ENCODE measurements at regions of chr5 and their contacts with region 1.

Region 1: GRCh38 chr5:77086689-77087483 is at the start of gene ZBED3:
- DNase-seq: peak; percentile 29 to 87 (median 68)
- ATAC-seq: peak; percentile 87
- H3K4me3 ChIP-seq: peak within 1 kb of the TSS; percentile 74
- H3K4me3 Mint-ChIP-seq: peak within 1 kb of the TSS; percentile 92
- H3K27ac ChIP-seq: peak within 1 kb of the TSS; percentile 34 to 57
- H3K27ac Mint-ChIP-seq: peak within 1 kb of the TSS; percentile 84
- H3K4me1 ChIP-seq: peaks cover 16% of the 10 kb centered on the region
- H3K4me1 Mint-ChIP-seq: peaks cover 25% of the 10 kb centered on the region
- H3K27me3 ChIP-seq: no peaks in the 10 kb centered on the region
- H3K27me3 Mint-ChIP-seq: peaks cover 2% of the 10 kb centered on the region
- CTCF ChIP-seq: peak; percentile 31
- total RNA-seq, gene ZBED3: 11.6 to 12.3 TPM

Region 2: GRCh38 chr5:76971516-76971915 is 115.4 kb before region 1 on chr5:
- CTCF ChIA-PET with region 1: no interaction called
- POLR2A ChIA-PET with region 1: no interaction called
- intact Hi-C with region 1: no loop called
- DNase-seq: no peak
- ATAC-seq: no peak
- H3K4me3 ChIP-seq: no peak overlapping the region
- H3K4me3 Mint-ChIP-seq: no peak overlapping the region
- H3K27ac ChIP-seq: no peak overlapping the region
- H3K27ac Mint-ChIP-seq: no peak overlapping the region
- H3K4me1 ChIP-seq: no peaks in the 10 kb centered on the region
- H3K4me1 Mint-ChIP-seq: no peaks in the 10 kb centered on the region
- H3K27me3 ChIP-seq: no peaks in the 10 kb centered on the region
- H3K27me3 Mint-ChIP-seq: peaks cover 13% of the 10 kb centered on the region
- CTCF ChIP-seq: no peak

Region 3: GRCh38 chr5:77030097-77031071 is 56.5 kb before region 1 on chr5 and contains the start of gene AGGF1:
- CTCF ChIA-PET with region 1: no interaction called
- POLR2A ChIA-PET with region 1: interaction called, 3 read pairs
- intact Hi-C with region 1: loop called in 1 of 2 experiments (anchors 2 kb)
- DNase-seq: peak; percentile 78 to 95 (median 92)
- ATAC-seq: peak; percentile 98
- H3K4me3 ChIP-seq: peak within 1 kb of the TSS; percentile 84 to 94
- H3K4me3 Mint-ChIP-seq: peak within 1 kb of the TSS; percentile 90
- H3K27ac ChIP-seq: peak within 1 kb of the TSS; percentile 69 to 85
- H3K27ac Mint-ChIP-seq: peak within 1 kb of the TSS; percentile 94
- H3K4me1 ChIP-seq: peaks cover 21% of the 10 kb centered on the region
- H3K4me1 Mint-ChIP-seq: peaks cover 43% of the 10 kb centered on the region
- H3K27me3 ChIP-seq: no peaks in the 10 kb centered on the region
- H3K27me3 Mint-ChIP-seq: no peaks in the 10 kb centered on the region
- CTCF ChIP-seq: no peak
- total RNA-seq, gene AGGF1: 14.8 to 14.9 TPM

Region 4: GRCh38 chr5:77155179-77155785 is 68.4 kb after region 1 on chr5:
- CTCF ChIA-PET with region 1: interaction called, 3 read pairs
- POLR2A ChIA-PET with region 1: no interaction called
- intact Hi-C with region 1: loop called in 1 of 2 experiments (anchors 2 kb)
- DNase-seq: peak in 6 of 9 experiments; percentile 3 to 89 (median 50)
- ATAC-seq: peak; percentile 91
- H3K4me3 ChIP-seq: no peak overlapping the region
- H3K4me3 Mint-ChIP-seq: peak overlapping the region; percentile 45
- H3K27ac ChIP-seq: peak overlapping the region in 1 of 2 experiments; percentile 19
- H3K27ac Mint-ChIP-seq: peak overlapping the region; percentile 87
- H3K4me1 ChIP-seq: peaks cover 25% of the 10 kb centered on the region
- H3K4me1 Mint-ChIP-seq: peaks cover 31% of the 10 kb centered on the region
- H3K27me3 ChIP-seq: no peaks in the 10 kb centered on the region
- H3K27me3 Mint-ChIP-seq: peaks cover 4% of the 10 kb centered on the region
- CTCF ChIP-seq: no peak

Region 5: DNA sequence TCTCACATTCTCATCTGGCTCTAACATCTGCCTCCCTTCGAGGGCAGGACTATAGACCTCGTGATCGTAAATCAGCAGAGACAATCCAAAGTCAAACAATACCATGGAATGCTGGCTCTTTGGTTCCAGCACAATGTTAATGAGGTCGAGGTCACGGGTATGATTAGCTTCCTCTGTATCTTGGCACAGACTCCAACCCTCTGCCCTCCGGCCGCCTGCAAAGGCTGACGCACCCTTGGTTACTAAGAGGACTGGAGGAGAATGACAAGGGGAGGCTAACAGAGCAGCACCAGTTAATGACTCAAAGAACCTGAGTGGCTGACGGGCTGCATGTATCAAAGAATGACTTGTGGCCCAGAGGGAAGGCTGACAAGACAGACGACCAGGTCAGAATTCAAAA is 1551.5 kb after region 1 on chr5:
- CTCF ChIA-PET with region 1: no interaction called
- POLR2A ChIA-PET with region 1: no interaction called
- intact Hi-C with region 1: no loop called
- DNase-seq: no peak
- ATAC-seq: no peak
- H3K4me3 ChIP-seq: no peak overlapping the region
- H3K4me3 Mint-ChIP-seq: no peak overlapping the region
- H3K27ac ChIP-seq: no peak overlapping the region
- H3K27ac Mint-ChIP-seq: no peak overlapping the region
- H3K4me1 ChIP-seq: no peaks in the 10 kb centered on the region
- H3K4me1 Mint-ChIP-seq: no peaks in the 10 kb centered on the region
- H3K27me3 ChIP-seq: peaks cover 0 to 2% of the 10 kb centered on the region in 2 experiments
- H3K27me3 Mint-ChIP-seq: peaks cover 17% of the 10 kb centered on the region
- CTCF ChIP-seq: no peak